ENCODE measurements at regions of chr2 and their contacts with region 1.

Region 1: DNA sequence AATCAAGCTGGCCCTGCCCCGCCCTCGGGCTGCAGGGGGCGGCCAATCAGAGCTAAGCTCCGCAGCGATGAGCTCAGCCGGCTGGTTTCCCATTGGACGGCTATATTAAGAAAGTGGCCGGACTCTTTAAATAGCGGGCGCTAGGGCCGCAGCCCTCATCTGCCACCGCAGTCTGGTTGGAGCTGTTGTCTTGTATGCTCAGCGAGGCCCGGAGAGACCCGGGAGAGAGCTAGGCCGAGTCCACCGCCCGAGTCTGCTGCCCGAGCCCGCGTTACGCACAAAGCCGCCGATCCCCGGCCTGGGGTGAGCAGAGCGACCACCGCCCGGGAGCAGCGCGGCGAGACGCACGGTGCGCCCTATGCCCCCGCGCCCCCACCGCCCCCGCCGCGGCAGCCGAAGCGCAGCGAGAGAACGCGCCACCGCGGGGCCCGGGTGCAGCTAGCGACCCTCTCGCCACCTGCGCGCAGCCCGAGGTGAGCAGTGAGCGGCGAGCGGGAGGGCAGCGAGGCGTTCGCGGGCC is at the start of gene RHOB:
- DNase-seq: peak; percentile 97
- H3K4me3 Mint-ChIP-seq: peak within 1 kb of the TSS; percentile 71
- H3K27ac Mint-ChIP-seq: no peak within 1 kb of the TSS
- H3K4me1 Mint-ChIP-seq: no peaks in the 10 kb centered on the region
- H3K27me3 Mint-ChIP-seq: no peaks in the 10 kb centered on the region
- CTCF ChIP-seq: no peak
- total RNA-seq, gene RHOB: 28.1 and 45.7 TPM in 2 replicates

Region 2: DNA sequence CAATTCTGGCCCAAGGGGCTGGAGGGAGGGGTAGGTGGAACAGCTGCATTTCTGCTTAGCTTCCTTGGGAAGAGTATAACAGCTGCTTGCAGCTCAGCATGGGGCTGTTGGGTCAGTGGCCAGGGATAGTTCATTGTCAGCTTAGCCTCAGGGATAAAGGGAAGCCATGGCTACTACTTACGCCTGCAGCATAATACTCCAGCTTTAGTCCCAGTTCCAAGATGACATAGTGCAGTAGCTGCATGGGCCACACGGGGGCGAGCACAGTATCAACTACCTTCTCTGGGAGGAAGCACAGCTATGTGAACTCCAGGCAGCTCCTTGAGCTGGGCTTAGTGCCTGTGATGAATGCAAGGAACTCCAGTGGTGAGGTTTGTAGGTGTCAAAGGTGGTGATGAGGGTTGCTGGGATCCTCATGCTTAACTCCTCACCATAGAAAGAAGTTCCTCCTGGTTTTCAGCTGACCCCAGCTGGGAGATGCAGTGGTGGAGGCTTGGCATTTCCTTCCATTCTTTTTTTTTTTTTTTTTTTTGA is 35.5 kb before region 1 on chr2:
- CTCF ChIA-PET with region 1: interaction called, 125 read pairs
- POLR2A ChIA-PET with region 1: interaction called, 6 read pairs
- intact Hi-C with region 1: no loop called
- DNase-seq: peak; percentile 88
- H3K4me3 Mint-ChIP-seq: no peak overlapping the region
- H3K27ac Mint-ChIP-seq: no peak overlapping the region
- H3K4me1 Mint-ChIP-seq: peaks cover 23% of the 10 kb centered on the region
- H3K27me3 Mint-ChIP-seq: no peaks in the 10 kb centered on the region
- CTCF ChIP-seq: peak; percentile 74

Region 3: DNA sequence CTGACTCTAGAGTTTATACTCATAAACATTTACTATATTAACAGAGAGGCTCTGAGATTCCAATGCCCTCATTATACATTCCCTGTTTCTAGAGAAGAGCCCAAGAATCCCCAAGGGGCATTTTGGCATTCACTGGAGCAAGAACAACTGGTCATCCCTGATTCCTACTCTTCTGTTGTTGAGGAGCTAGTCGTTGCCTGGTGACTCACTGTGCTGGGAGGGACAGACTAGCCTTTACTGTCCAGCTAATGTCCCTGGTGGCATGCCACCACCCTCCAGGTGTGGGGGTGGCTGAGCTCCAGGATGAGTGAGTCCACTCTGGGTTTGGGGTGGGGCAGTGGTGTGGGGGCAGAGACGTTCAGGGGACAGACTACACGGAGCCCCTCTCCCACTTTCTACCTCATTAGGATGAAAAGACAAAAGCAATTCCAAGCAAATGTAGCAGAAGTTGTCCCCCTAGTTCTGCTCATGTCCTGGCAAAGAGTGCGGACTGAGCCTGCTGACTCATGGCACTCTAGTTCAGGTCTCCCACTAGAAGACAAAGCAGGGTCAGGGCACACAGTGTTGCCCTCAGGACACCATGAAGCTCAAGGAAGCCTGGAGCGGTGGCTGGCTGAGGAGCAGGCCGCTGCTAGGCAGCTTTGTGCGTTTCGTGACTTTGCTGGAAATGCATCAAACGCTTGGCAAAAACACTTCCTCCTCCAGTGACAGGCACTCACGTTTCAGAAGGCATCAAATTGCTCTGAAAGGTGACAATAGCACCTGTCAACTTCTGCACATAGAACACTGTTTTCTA is 49.3 kb after region 1 on chr2:
- CTCF ChIA-PET with region 1: interaction called, 4 read pairs
- POLR2A ChIA-PET with region 1: interaction called, 3 read pairs
- intact Hi-C with region 1: loop called (anchors 5 kb)
- DNase-seq: peak; percentile 68
- H3K4me3 Mint-ChIP-seq: peak overlapping the region; percentile 35
- H3K27ac Mint-ChIP-seq: peak overlapping the region; percentile 37
- H3K4me1 Mint-ChIP-seq: peaks cover 32% of the 10 kb centered on the region
- H3K27me3 Mint-ChIP-seq: no peaks in the 10 kb centered on the region
- CTCF ChIP-seq: no peak

Region 4: GRCh38 chr2:20625491-20626391 is 178.8 kb after region 1 on chr2:
- CTCF ChIA-PET with region 1: interaction called, 121 read pairs
- POLR2A ChIA-PET with region 1: interaction called, 5 read pairs
- intact Hi-C with region 1: no loop called
- DNase-seq: no peak
- H3K4me3 Mint-ChIP-seq: no peak overlapping the region
- H3K27ac Mint-ChIP-seq: no peak overlapping the region
- H3K4me1 Mint-ChIP-seq: peaks cover 4% of the 10 kb centered on the region
- H3K27me3 Mint-ChIP-seq: no peaks in the 10 kb centered on the region
- CTCF ChIP-seq: no peak

Region 5: DNA sequence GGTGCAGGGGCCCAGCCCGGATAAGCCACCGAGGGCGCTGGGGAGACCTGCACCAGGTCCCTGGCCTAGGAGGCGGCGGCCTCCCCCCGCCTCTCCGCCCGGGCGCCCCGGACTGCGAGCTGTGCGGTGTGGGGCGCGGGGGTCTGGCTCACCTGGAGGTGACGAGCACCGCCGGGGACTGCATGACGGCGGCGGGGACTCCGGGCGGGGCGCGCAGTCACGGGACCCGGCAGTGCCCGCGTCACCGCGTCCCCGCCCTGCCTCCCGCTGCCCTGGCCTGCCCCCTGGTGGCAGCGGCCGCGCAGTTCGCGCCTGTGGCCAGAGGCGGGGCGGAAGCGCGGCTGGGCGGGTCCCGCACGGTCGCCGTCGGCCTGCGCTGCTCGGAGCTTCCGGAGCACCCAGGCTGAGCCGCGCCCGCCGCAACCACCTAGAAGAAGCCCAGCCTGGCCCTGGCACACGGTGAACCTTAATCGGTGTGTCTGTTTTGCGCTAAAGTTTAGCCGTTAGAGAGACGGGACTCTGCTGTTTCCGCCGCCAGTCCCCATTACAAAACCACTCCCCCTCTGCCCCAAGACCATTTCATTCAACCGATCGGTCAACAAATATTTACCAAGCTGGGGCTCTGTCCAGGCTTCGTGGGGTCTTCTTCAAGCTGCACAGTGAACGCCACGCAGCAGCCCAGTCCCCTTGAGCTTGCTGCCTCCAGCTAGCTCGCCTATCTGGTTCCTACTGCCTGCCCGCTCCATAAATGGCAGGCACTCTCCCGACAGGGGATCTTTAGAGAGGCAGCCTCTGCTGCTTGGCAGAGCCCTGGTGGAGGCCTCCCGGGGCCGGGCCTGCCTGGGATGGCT is 204.1 kb after region 1 on chr2 and contains the start of gene HS1BP3:
- CTCF ChIA-PET with region 1: interaction called, 54 read pairs
- POLR2A ChIA-PET with region 1: interaction called, 11 read pairs
- intact Hi-C with region 1: no loop called
- DNase-seq: peak; percentile 81
- H3K4me3 Mint-ChIP-seq: peak within 1 kb of the TSS; percentile 82
- H3K27ac Mint-ChIP-seq: peak within 1 kb of the TSS; percentile 62
- H3K4me1 Mint-ChIP-seq: peaks cover 22% of the 10 kb centered on the region
- H3K27me3 Mint-ChIP-seq: peaks cover 12% of the 10 kb centered on the region
- CTCF ChIP-seq: peak; percentile 89
- total RNA-seq, gene HS1BP3: 10.0 and 25.1 TPM in 2 replicates

Region 6: GRCh38 chr2:21118302-21118920 is 671.4 kb after region 1 on chr2:
- CTCF ChIA-PET with region 1: no interaction called
- POLR2A ChIA-PET with region 1: no interaction called
- intact Hi-C with region 1: loop called (anchors 5 kb)
- DNase-seq: peak; percentile 40
- H3K4me3 Mint-ChIP-seq: no peak overlapping the region
- H3K27ac Mint-ChIP-seq: no peak overlapping the region
- H3K4me1 Mint-ChIP-seq: no peaks in the 10 kb centered on the region
- H3K27me3 Mint-ChIP-seq: peaks cover 57% of the 10 kb centered on the region
- CTCF ChIP-seq: peak; percentile 49

Measured in MCF 10A (cell line).